ENCODE measurements at regions of chr19 and their contacts with region 1.

Region 1: DNA sequence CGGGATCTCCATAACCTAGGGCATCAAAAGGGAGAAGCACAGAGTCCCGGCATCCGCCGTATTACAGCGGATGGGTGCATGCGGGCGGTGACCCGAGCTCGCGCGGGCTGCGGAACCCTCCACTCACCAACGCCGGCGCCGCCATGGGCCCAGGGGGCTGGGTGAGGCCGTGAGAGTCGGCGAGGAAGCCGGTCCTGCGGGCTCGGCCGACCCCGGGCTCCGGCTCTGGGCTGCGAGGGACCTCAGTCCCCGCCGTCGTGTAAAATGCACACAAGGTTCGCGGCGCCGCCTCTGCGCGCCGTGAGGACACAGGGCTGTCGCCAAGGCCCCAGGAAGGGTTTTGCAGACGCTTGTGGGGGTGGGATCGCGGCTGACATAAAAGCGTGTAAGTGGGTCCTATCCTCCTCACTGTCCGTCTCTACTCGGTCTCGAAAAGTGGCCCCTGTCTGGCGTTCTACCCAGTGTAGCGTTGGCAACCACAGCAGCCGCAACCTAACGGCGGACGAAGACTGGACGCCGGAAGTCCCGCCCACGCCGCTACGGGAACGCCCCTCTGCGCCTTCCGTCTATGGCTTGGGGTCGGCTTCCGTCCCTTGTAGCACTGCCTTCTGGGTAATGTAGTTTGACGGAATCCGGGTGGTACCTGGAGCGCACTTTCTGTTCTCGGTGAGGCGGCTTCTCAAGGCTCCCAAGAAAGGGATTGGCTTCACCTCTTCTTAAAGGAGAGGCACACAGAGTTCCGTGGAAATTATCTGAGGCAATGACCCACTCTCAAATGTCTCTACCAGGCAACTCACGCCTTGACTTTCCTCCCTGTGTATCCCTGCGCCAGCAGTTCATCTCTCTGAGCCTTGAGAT is at the start of gene ZNF599:
- DNase-seq: peak; percentile 77 to 94 (median 90)
- ATAC-seq: peak; percentile 97
- H3K4me3 ChIP-seq: peak within 1 kb of the TSS; percentile 80 to 88
- H3K4me3 Mint-ChIP-seq: peak within 1 kb of the TSS; percentile 98
- H3K27ac ChIP-seq: peak within 1 kb of the TSS; percentile 69 to 77
- H3K27ac Mint-ChIP-seq: peak within 1 kb of the TSS; percentile 98
- H3K4me1 ChIP-seq: peaks cover 9% of the 10 kb centered on the region
- H3K4me1 Mint-ChIP-seq: peaks cover 21% of the 10 kb centered on the region
- H3K27me3 ChIP-seq: no peaks in the 10 kb centered on the region
- H3K27me3 Mint-ChIP-seq: peaks cover 6% of the 10 kb centered on the region
- CTCF ChIP-seq: no peak
- total RNA-seq, gene ZNF599: 3.9 to 4.5 TPM

Region 2: DNA sequence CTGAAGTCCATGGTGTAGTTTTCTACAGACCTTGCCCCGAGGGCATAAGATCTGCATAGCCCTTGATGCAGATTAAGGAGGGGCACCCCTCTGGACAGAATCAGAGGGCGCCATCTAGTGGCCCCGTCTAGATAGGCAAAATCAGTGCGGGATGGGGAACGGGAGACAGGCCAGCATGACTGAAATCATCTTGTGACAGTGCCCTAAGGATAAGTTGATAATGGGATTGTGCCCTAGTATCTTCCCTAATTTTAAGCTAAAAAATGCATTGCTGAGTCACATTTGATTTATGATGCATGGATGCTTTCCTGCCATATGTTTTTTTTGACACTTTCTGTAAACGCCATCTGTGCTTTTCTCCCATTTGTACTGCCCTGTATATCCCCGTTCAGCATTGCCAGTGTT is 427.0 kb before region 1 on chr19:
- CTCF ChIA-PET with region 1: no interaction called
- POLR2A ChIA-PET with region 1: no interaction called
- intact Hi-C with region 1: no loop called
- DNase-seq: peak; percentile 37 to 79 (median 73)
- ATAC-seq: no peak
- H3K4me3 ChIP-seq: no peak overlapping the region
- H3K4me3 Mint-ChIP-seq: no peak overlapping the region
- H3K27ac ChIP-seq: no peak overlapping the region
- H3K27ac Mint-ChIP-seq: no peak overlapping the region
- H3K4me1 ChIP-seq: peaks cover 19% of the 10 kb centered on the region
- H3K4me1 Mint-ChIP-seq: peaks cover 19% of the 10 kb centered on the region
- H3K27me3 ChIP-seq: no peaks in the 10 kb centered on the region
- H3K27me3 Mint-ChIP-seq: no peaks in the 10 kb centered on the region
- CTCF ChIP-seq: peak; percentile 82

Region 3: DNA sequence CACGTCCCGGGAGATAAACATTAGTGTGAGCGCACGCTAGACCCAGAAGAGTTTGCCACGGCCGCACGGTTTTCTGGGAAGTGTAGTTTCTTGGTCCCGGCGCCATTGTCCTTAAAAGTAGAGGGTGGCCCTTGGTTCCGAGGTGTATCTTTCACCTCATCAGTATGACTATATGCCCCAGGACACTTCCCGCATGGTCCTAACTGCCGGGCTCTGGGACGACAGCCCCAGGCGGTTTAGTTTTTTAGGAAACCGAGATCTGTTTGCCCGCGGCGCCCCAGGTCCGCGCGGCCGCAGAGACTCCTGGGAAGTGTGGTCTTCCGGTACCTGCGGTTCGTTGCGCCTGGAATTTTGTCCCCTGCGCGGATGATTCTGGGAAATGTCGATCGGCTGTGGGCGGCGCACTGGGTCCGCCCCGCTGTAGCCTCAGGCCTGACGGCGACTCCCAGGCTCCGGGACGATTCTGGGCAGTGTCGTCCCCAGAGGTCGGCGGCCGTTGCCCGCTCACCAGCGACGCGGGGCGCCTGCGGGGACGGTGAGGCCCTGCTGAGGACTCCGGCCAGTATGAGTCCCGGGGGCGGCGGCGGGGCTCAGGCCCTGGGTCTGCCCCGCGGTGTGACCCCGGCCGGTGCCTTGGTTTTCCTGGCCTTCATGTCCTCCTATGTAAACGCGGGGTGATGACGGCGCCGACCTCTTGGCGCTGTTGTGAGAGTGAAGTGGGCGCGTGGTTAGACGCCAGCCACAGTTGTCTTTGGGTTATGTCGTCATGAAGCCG is 38.9 kb before region 1 on chr19 and contains the start of gene ZNF181:
- CTCF ChIA-PET with region 1: no interaction called
- POLR2A ChIA-PET with region 1: no interaction called
- intact Hi-C with region 1: loop called (anchors 1 kb)
- DNase-seq: peak; percentile 56 to 90 (median 82)
- ATAC-seq: peak; percentile 87
- H3K4me3 ChIP-seq: peak within 1 kb of the TSS; percentile 88 to 93
- H3K4me3 Mint-ChIP-seq: peak within 1 kb of the TSS; percentile 95
- H3K27ac ChIP-seq: peak within 1 kb of the TSS; percentile 92 to 96
- H3K27ac Mint-ChIP-seq: peak within 1 kb of the TSS; percentile 98
- H3K4me1 ChIP-seq: peaks cover 26% of the 10 kb centered on the region
- H3K4me1 Mint-ChIP-seq: peaks cover 34% of the 10 kb centered on the region
- H3K27me3 ChIP-seq: no peaks in the 10 kb centered on the region
- H3K27me3 Mint-ChIP-seq: no peaks in the 10 kb centered on the region
- CTCF ChIP-seq: no peak
- total RNA-seq, gene ZNF181: 1.5 to 1.7 TPM

Region 4: GRCh38 chr19:34851353-34851752 is 78.4 kb after region 1 on chr19:
- CTCF ChIA-PET with region 1: no interaction called
- POLR2A ChIA-PET with region 1: no interaction called
- intact Hi-C with region 1: loop called in 1 of 2 experiments (anchors 5 kb)
- DNase-seq: peak in 2 of 9 experiments; percentile 17 to 32
- ATAC-seq: no peak
- H3K4me3 ChIP-seq: no peak overlapping the region
- H3K4me3 Mint-ChIP-seq: no peak overlapping the region
- H3K27ac ChIP-seq: no peak overlapping the region
- H3K27ac Mint-ChIP-seq: peak overlapping the region; percentile 37
- H3K4me1 ChIP-seq: peaks cover 12% of the 10 kb centered on the region
- H3K4me1 Mint-ChIP-seq: peaks cover 48% of the 10 kb centered on the region
- H3K27me3 ChIP-seq: no peaks in the 10 kb centered on the region
- H3K27me3 Mint-ChIP-seq: no peaks in the 10 kb centered on the region
- CTCF ChIP-seq: no peak

Measured in CD8-positive, alpha-beta T cell (primary cell).